Calu3 (cell line): ENCODE measurements at regions of chr15 and their contacts with region 1.

Region 1: GRCh38 chr15:99275525-99276128 is 24.3 kb downstream of the LRRC28 start:
- DNase-seq: no peak
- H3K4me3 Mint-ChIP-seq: no peak overlapping the region
- H3K27ac Mint-ChIP-seq: no peak overlapping the region
- H3K4me1 Mint-ChIP-seq: no peaks in the 10 kb centered on the region
- H3K27me3 Mint-ChIP-seq: no peaks in the 10 kb centered on the region
- CTCF ChIP-seq: no peak

Region 2: GRCh38 chr15:99755692-99756409 is 480.2 kb after region 1 on chr15:
- CTCF ChIA-PET with region 1: interaction called, 3 read pairs
- intact Hi-C with region 1: loop called (anchors 1 kb)
- DNase-seq: peak; percentile 56
- H3K4me3 Mint-ChIP-seq: no peak overlapping the region
- H3K27ac Mint-ChIP-seq: no peak overlapping the region
- H3K4me1 Mint-ChIP-seq: no peaks in the 10 kb centered on the region
- H3K27me3 Mint-ChIP-seq: no peaks in the 10 kb centered on the region
- CTCF ChIP-seq: peak; percentile 70